ENCODE measurements at regions of chr1 and their contacts with region 1.

Region 1: GRCh38 chr1:84689514-84690396 is 506 bp downstream of the SSX2IP start:
- DNase-seq: peak; percentile 58 to 62
- H3K4me3 ChIP-seq: peak overlapping the region; percentile 68 to 76
- H3K27ac ChIP-seq: peak overlapping the region; percentile 81 to 83
- H3K4me1 ChIP-seq: no peaks in the 10 kb centered on the region
- H3K27me3 ChIP-seq: no peaks in the 10 kb centered on the region
- CTCF ChIP-seq: peak in 2 of 4 experiments; percentile 14 to 40
- POLR2A ChIP-seq: no peak

Region 2: DNA sequence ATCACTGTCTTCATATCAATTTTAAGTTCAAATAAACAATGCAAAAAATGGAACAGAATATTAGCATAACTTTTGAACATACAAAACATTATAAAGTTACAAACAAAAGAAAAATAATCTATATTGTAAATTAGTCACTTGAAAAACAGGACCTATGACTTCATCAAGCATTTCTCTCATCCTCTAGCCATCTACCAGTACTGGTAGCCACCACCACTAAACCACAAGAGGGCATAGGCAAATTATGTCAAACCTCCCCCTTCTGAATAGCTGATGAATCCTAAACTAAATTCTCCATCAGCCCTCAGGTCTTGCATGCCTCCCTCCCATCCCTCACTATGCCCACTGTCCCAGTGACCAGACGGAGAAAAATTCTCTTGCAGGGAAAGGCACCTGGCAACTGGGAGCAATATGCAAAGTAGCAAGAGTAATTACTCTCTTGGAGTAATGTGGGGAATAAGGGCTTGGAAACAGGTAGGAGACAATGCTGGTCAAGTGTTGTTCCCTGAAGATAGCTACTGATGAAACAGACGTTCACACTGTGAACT is 36.6 kb before region 1 on chr1:
- intact Hi-C with region 1: no loop called
- DNase-seq: no peak
- H3K4me3 ChIP-seq: no peak overlapping the region
- H3K27ac ChIP-seq: no peak overlapping the region
- H3K4me1 ChIP-seq: no peaks in the 10 kb centered on the region
- H3K27me3 ChIP-seq: no peaks in the 10 kb centered on the region
- CTCF ChIP-seq: no peak
- POLR2A ChIP-seq: no peak

Region 3: GRCh38 chr1:84742653-84743052 is 52.9 kb after region 1 on chr1:
- intact Hi-C with region 1: loop called (anchors 10 kb)
- DNase-seq: no peak
- H3K4me3 ChIP-seq: no peak overlapping the region
- H3K27ac ChIP-seq: no peak overlapping the region
- H3K4me1 ChIP-seq: no peaks in the 10 kb centered on the region
- H3K27me3 ChIP-seq: no peaks in the 10 kb centered on the region
- CTCF ChIP-seq: no peak
- POLR2A ChIP-seq: no peak